K562 (cell line): ENCODE measurements at regions of chr1 and their contacts with region 1.

Region 1: DNA sequence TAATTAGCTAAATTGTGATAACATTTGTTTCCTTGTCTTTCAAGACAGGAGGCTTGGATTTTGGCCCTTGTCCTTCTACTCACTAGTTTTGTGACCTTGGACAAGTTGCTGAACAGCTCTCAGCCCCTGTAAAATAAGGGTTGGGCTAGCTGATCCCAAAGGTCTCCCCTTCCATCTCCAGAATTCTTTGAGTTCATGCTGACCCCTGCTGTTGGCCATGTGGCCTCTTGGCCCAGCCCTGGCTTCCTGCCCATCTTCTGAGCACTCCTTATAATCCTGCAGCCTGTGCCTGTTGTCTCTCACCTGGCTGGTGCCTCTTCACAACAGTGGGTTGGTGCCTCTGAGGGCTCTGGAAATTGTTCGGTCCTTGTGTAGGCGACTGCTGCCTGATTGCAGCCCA is 10.1 kb downstream of the PTGFRN start:
- DNase-seq: peak; percentile 31 to 72 (median 52)
- ATAC-seq: peak; percentile 68
- H3K4me3 ChIP-seq: no peak overlapping the region
- H3K27ac ChIP-seq: no peak overlapping the region
- H3K4me1 ChIP-seq: peaks cover 24 to 61% of the 10 kb centered on the region in 2 experiments
- H3K27me3 ChIP-seq: no peaks in the 10 kb centered on the region
- CTCF ChIP-seq: peak; percentile 23 to 61 (median 54); a peak in 4 of 6 replicates
- EP300 ChIP-seq: no peak
- POLR2A ChIP-seq: no peak
- RAD21 ChIP-seq: peak; percentile 66 to 79

Region 2: DNA sequence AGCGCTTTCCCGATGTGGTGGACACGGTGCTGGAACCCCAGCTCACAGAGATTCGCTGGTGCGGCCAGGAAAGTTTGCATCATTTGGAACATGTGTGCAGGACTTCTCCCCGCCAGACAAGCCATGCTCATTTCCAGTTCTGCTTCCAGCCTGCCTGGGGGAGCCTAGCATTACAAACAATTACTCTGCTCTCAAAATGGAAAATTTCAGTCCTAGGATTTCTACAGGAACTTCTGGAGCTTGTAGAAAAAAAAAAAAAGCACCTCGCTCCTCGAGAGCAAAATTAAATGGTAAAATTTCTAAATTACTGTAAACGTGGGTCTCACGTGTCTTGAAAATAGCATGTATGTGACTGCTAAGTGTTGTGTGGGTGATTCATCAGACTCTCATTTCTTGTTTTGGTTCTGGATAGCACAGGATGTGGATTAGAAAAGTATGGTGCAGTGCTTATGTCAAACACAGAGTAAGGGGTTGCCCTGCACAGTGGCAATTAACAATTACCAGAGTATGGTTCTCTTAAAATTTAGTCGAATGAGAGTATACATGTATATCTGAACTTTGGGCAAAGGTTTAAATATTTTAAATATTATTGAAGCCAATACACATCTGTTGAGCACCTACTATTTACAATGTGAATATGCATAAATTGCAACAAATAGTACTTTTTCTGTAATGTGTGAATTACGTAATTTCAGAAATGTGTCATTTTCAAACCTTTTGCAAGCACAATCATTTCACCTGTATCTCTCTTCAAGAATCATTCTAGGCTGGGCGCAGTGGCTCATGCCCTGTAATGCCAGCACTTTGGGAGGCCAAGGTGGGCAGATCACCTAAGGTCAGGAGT is 71.9 kb before region 1 on chr1:
- CTCF ChIA-PET with region 1: no interaction called
- POLR2A ChIA-PET with region 1: interaction called, 3 read pairs
- in situ Hi-C with region 1: no loop called
- intact Hi-C with region 1: loop called (anchors 5 kb)
- DNase-seq: no peak
- ATAC-seq: no peak
- H3K4me3 ChIP-seq: no peak overlapping the region
- H3K27ac ChIP-seq: no peak overlapping the region
- H3K4me1 ChIP-seq: peaks cover 5 to 21% of the 10 kb centered on the region in 2 experiments
- H3K27me3 ChIP-seq: no peaks in the 10 kb centered on the region
- CTCF ChIP-seq: no peak
- EP300 ChIP-seq: no peak
- POLR2A ChIP-seq: no peak
- RAD21 ChIP-seq: no peak

Region 3: GRCh38 chr1:116902032-116902738 is 17.6 kb before region 1 on chr1:
- CTCF ChIA-PET with region 1: no interaction called
- POLR2A ChIA-PET with region 1: interaction called, 12 read pairs
- in situ Hi-C with region 1: no loop called
- intact Hi-C with region 1: no loop called
- DNase-seq: no peak
- ATAC-seq: peak; percentile 70
- H3K4me3 ChIP-seq: no peak overlapping the region
- H3K27ac ChIP-seq: no peak overlapping the region
- H3K4me1 ChIP-seq: no peaks in the 10 kb centered on the region; a peak in 3 of 5 replicates
- H3K27me3 ChIP-seq: peaks cover 5 to 11% of the 10 kb centered on the region in 2 experiments; a peak in 3 of 5 replicates
- CTCF ChIP-seq: no peak
- EP300 ChIP-seq: no peak
- POLR2A ChIP-seq: no peak
- RAD21 ChIP-seq: no peak

Region 4: DNA sequence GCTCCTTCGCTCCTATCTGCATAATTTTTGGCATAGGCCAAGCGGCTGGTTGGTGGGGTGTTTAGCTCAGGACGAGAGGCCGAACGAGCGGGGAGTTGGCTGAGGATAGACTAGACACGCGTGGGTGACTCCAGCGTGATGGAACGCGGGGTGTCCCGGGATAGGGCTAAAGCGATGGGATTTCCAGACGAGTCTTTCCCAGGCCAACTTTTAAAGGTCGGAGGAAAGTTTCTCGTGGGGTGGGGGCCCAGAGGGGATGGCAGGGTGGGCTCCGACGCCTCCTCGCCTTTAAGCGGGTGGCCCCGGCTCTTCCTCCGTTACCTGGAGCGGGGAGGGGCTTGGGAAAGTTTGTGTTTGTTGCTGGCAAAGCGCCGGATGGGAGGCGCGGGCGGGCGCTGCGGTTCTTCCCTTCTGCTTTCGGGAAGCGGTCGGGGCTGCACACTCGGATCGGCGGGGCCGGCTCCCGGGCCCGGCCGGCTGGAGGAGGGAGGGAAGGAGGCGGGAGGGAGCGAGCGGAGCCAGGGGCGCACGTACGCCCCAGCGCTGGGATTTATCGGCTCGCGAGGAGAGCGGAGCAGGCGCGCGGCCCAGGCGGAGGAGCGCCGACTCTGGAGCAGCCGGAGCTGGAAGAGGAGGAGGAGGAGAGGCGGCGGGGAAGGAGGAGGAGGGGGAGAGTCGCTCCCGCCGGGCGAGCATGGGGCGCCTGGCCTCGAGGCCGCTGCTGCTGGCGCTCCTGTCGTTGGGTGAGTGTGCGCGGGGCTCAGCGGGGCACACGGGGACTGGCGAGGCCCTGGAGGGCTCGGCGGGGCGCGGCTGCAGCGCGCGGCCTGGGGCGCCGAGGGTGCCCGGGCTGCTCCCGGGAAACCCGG is 10.1 kb before region 1 on chr1 and contains the start of gene PTGFRN:
- CTCF ChIA-PET with region 1: no interaction called
- POLR2A ChIA-PET with region 1: interaction called, 15 read pairs
- in situ Hi-C with region 1: no loop called
- intact Hi-C with region 1: no loop called
- DNase-seq: peak; percentile 72 to 78 (median 76)
- ATAC-seq: peak; percentile 74
- H3K4me3 ChIP-seq: peak within 1 kb of the TSS; percentile 65
- H3K27ac ChIP-seq: peak within 1 kb of the TSS; percentile 74
- H3K4me1 ChIP-seq: peaks cover 31 to 33% of the 10 kb centered on the region in 2 experiments
- H3K27me3 ChIP-seq: no peaks in the 10 kb centered on the region
- CTCF ChIP-seq: no peak
- EP300 ChIP-seq: no peak
- POLR2A ChIP-seq: peak; percentile 51; the same call in 1 of the 2 replicates
- RAD21 ChIP-seq: 0 out of 4 replicates have a peak, but pooled peaks of 1 of the 2 experiments have one; percentile 6
- polyA plus RNA-seq, gene PTGFRN: 17.3 to 26.5 TPM

Region 5: GRCh38 chr1:116934586-116935207 is 14.9 kb after region 1 on chr1:
- CTCF ChIA-PET with region 1: no interaction called
- POLR2A ChIA-PET with region 1: interaction called, 13 read pairs
- in situ Hi-C with region 1: no loop called
- intact Hi-C with region 1: no loop called
- DNase-seq: peak; percentile 41 to 60 (median 54)
- ATAC-seq: peak; percentile 81
- H3K4me3 ChIP-seq: no peak overlapping the region
- H3K27ac ChIP-seq: no peak overlapping the region
- H3K4me1 ChIP-seq: peaks cover 11 to 34% of the 10 kb centered on the region in 2 experiments
- H3K27me3 ChIP-seq: no peaks in the 10 kb centered on the region
- CTCF ChIP-seq: peak; percentile 23 to 68 (median 65); a peak in 5 of 6 replicates
- EP300 ChIP-seq: no peak
- POLR2A ChIP-seq: no peak
- RAD21 ChIP-seq: peak; percentile 29 to 58; a peak in 3 of 4 replicates

Region 6: DNA sequence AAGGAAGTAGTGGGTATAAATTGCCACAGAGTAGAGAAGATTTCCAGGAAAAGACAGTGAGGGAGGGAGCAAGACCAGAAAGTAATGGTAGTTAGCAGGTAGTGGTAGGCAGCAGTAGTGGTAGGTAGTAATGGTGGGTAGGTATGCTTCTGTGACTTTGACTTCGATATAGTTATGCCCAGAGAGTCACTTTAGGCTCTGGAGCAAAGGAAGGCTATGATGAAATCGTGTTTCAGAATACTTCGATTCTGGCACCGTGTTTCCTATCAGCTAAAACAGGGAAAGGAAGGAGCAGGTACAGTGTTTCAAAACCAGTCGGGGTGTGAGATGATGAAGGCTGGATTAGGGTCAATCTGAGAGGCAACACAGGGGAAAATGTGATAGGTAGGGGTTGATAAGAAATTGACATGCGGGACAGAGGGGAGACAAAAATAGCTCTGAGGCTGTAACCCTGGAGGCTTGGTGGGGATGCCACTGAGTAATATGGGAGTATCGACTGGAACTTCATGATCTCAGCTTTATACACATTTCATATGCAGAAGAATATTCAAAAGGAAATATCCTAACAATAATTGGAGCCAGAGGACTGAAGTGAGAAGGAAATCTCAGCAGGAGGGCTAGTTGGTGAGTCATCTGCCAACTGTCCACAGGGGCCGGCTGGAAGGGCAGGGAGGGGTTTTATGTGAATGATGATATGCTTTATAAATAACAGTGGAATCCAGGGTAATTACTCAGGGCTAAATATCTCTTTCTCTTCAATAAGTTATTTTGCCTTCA is 227.0 kb after region 1 on chr1:
- CTCF ChIA-PET with region 1: no interaction called
- POLR2A ChIA-PET with region 1: no interaction called
- in situ Hi-C with region 1: no loop called
- intact Hi-C with region 1: no loop called
- DNase-seq: peak in 1 of 4 experiments; percentile 15
- ATAC-seq: no peak
- H3K4me3 ChIP-seq: no peak overlapping the region
- H3K27ac ChIP-seq: no peak overlapping the region
- H3K4me1 ChIP-seq: no peaks in the 10 kb centered on the region
- H3K27me3 ChIP-seq: peaks cover 11 to 22% of the 10 kb centered on the region in 2 experiments; a peak in 3 of 5 replicates
- CTCF ChIP-seq: no peak
- EP300 ChIP-seq: no peak
- POLR2A ChIP-seq: no peak
- RAD21 ChIP-seq: no peak